ENCODE measurements at regions of chr10 and their contacts with region 1.

Region 1: DNA sequence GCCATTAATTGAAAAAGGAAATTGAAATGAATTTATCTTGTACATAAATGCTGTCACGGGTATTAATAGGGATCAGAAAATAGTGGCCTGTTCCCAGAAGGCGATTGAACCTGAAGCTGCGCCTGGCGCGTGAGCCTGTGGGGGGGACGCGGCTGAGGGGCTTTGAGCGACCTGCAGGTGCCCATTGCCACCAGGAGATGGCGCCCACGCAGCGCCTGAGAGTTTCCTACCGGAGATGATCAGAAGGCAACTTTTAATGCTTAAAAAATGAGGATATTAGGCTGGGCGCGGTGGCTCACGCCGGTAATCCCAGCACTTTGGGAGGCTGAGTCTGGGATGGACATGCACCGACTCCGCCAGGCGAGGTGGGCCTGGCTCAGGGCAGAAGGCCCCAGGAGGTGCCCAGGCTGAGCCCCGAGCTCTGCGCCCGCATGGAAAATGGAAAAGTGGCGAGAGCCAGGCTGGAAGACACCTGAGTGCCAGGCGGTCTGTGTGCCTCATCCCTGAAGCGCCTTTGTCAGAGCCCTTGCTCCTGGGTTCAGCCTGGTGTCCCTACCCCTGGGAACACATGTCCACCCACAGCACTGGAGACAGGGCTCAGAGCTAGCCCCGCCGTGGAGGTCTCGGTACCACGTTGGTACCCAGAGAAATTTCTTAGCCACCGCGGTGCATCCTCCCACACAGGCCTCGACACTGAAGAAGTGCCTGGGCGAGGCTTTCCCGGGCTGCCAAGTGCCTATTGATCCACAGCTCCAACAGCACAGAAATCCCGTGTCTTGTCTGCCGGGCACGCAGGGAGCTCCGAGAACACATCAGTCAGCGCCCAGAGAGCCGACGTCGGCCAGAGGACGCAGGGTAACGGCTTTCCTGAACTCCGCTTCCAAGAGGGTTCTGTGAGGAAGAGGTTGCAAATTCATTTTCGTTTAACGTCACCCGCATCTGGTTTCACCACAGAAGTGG is 117.4 kb downstream of the INPP5A start:
- DNase-seq: peak in 2 of 5 donors; percentile 45 to 53
- ATAC-seq: no peak
- H3K4me3 ChIP-seq: no peak overlapping the region
- H3K27ac ChIP-seq: no peak overlapping the region
- H3K4me1 ChIP-seq: peaks cover 0 to 9% (median 0%) of the 10 kb centered on the region in 12 donors
- H3K27me3 ChIP-seq: no peaks in the 10 kb centered on the region
- CTCF ChIP-seq: peak; percentile 77 to 93 (median 89)
- POLR2A ChIP-seq: no peak

Region 2: DNA sequence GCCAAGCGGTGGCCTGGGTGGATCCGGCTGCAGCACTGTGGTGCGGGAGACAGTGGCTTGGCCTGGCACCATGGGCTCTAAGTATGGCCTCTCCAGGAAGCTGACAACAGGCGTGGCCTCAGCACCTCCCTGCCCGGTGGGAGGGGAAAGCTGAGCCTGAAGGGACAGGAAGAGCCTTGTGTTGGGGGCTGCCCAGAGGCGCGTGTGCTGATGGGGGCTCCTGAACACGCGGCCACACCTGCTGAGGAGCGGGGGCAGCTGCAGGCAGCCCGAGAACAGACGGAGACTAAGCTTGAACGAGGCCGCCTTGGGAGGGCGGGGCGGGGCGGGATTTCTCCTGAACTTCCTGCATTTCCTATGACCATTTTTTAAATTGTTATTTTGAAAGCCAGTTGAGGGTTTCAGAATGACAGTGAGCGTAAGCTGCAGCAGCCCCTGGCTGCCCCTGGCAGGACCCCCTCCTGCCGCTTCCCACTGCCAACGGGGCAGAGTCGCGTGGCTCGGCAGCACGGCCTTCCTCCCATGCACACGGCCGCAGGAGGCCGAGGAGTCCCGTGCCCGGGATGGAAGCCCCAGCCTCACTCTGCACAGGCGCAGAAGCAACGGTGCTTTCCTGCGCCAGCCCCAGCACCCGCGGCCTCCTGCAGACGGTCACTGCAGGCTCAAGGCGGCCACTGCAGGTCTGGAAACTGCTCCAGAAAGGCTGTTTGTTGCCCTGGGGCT is 425.0 kb before region 1 on chr10:
- intact Hi-C with region 1: loop called in 1 of 10 experiments (anchors 5 kb)
- DNase-seq: peak in 3 of 5 donors; percentile 45 to 79 (median 49)
- ATAC-seq: peak; percentile 45 to 55 (median 48)
- H3K4me3 ChIP-seq: peak overlapping the region in 9 of 12 donors; percentile 28 to 54 (median 40)
- H3K27ac ChIP-seq: peak overlapping the region in 9 of 12 donors; percentile 5 to 87 (median 39)
- H3K4me1 ChIP-seq: peaks cover 0 to 58% (median 0%) of the 10 kb centered on the region in 12 donors
- H3K27me3 ChIP-seq: no peaks in the 10 kb centered on the region
- CTCF ChIP-seq: no peak
- POLR2A ChIP-seq: no peak

Region 3: GRCh38 chr10:132434405-132435005 is 220.5 kb before region 1 on chr10:
- intact Hi-C with region 1: no loop called
- DNase-seq: peak in 4 of 5 donors; percentile 59 to 85 (median 70)
- ATAC-seq: peak in 2 of 4 donors; percentile 37 to 50
- H3K4me3 ChIP-seq: peak overlapping the region in 1 of 12 donors; percentile 26
- H3K27ac ChIP-seq: no peak overlapping the region
- H3K4me1 ChIP-seq: peaks cover 0 to 17% (median 0%) of the 10 kb centered on the region in 12 donors
- H3K27me3 ChIP-seq: no peaks in the 10 kb centered on the region
- CTCF ChIP-seq: no peak
- POLR2A ChIP-seq: no peak

Region 4: DNA sequence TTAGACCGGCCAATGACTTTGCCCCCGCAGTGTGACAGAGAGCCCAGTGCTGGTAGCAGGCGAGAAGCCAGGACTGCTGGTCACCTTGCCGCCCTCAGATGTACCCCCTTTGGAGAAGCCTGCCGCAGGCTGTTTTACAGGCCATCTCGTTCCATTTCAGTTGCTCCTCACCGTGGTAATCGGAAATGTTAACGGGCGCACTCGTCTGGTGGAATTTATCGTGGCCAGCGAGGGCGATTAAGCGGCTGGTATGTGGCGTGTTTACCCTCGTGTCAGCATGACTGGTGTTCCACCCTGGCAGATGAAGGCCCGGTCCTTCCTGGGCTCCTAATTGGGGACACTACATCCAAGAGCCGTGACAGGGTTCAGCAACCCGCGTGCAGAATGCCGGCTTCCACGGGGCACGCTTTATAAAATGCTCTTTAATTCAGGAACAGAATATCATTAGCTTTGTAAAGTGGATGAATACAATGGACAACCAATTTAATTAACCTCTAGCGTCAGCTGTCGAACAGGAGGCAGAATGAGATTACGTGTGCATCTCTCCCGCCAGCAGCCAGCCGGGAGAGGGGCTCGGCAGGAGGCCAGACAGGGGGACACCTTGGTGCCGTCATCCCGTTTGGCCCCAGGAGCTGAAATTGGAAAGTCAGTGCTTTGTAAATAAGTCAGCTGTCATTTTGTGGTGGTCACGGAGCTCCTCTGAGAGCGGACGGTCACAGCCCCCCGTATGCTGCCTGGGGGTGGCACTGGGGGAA is 22.7 kb after region 1 on chr10:
- intact Hi-C with region 1: no loop called
- DNase-seq: peak in 1 of 5 donors; percentile 9
- ATAC-seq: peak in 1 of 4 donors; percentile 19
- H3K4me3 ChIP-seq: no peak overlapping the region
- H3K27ac ChIP-seq: no peak overlapping the region
- H3K4me1 ChIP-seq: no peaks in the 10 kb centered on the region
- H3K27me3 ChIP-seq: no peaks in the 10 kb centered on the region
- CTCF ChIP-seq: no peak
- POLR2A ChIP-seq: no peak

Region 5: DNA sequence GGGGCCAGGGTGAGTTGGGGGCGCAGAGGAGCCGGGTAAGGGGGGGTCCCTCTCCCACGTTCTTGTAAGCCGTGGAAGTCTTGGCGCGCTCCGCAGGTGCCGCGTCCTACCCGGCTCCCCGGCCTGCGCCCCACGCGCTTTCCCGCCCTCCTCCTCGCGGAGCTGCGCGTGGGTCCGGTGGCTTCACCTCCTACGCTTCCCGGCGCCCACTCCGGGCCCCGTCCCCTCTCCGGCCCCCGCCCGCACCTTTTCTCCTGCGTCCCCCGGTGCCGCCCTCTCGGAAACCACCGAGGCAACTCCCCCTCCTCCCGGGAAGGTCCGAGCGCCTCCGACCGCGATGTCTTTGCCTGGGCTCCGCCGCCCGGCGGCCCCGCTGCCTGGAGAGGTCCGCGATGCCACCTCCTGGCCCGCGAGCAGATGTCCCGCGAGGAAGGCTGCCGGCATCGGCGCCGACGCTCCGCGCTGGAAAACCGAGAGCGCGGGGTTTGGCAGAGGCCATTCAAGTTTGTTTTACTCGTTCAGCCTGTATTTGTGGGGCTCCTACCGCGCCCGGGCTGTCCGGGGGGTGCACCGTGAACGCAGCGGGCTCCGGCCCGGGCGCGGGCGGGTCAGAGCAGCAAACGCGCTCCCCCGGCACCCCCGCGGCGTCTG is 133.3 kb after region 1 on chr10:
- intact Hi-C with region 1: loop called in 3 of 10 experiments (anchors 5 kb)
- DNase-seq: no peak
- ATAC-seq: peak in 2 of 4 donors; percentile 27 to 49
- H3K4me3 ChIP-seq: no peak overlapping the region
- H3K27ac ChIP-seq: no peak overlapping the region
- H3K4me1 ChIP-seq: peaks cover 0 to 47% (median 14%) of the 10 kb centered on the region in 12 donors
- H3K27me3 ChIP-seq: peaks cover 47 to 80% (median 67%) of the 10 kb centered on the region in 9 donors
- CTCF ChIP-seq: peak in 3 of 12 donors; percentile 5 to 17 (median 12)
- POLR2A ChIP-seq: no peak

Region 6: DNA sequence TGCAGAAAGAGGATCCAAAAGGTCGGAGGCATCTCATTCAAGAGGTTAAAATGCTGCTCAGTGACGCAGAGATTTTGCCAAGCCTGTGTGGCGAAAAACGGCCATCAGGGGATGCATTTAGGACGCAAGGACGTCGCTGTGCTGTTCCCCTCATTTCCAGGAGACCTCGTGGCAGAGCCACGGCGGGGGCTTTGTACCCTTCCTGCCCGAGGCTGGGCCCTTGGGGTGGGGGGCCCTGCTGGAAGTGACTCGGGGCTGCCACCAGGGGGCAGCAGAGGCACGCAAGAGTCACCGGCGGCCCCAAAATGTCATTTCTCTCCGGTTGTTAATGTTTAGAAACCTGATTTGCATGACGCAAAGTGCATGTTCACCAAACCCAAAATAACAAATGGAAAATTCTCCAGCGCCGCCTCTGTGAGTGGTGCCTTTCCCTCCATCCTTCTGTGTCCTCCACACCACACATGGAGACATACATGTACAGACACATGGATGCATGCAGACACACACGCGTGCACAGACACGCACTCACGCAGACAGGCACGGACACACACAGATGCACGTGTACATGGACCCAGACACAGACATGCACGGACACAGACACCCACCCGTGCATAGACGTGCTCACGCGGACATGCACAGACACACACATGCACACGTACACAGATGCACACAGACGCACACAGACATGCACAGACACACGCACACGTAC is 182.0 kb after region 1 on chr10:
- intact Hi-C with region 1: loop called in 3 of 10 experiments (anchors 5 to 10 kb)
- DNase-seq: peak in 1 of 5 donors; percentile 14
- ATAC-seq: peak in 3 of 4 donors; percentile 40 to 64 (median 59)
- H3K4me3 ChIP-seq: peak overlapping the region in 1 of 12 donors; percentile 3
- H3K27ac ChIP-seq: no peak overlapping the region
- H3K4me1 ChIP-seq: peaks cover 0 to 6% (median 0%) of the 10 kb centered on the region in 12 donors
- H3K27me3 ChIP-seq: peaks cover 10 to 55% (median 22%) of the 10 kb centered on the region in 9 donors
- CTCF ChIP-seq: peak; percentile 89 to 99 (median 96)
- POLR2A ChIP-seq: no peak

Region 7: DNA sequence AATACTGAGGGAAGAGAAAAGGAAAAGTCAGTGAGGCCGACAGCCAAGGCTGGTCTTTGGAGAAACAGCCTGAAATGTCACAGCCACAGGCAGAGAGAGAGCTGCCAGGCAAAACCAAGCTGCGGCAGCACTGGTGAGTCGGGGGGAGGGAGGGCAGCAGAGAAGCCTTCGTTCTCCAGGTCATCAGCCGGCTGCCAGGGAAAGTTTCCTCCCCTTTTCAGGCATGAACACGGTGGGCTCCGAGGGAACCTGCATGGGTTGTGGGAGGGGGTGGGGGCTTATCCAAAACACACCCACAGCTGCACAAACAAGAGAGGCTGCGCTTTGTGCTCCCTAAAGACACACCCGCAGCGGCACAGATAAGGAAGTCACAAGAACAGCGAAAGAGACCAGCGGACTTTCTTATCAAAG is 193.3 kb after region 1 on chr10:
- intact Hi-C with region 1: no loop called
- DNase-seq: peak in 1 of 5 donors; percentile 14
- ATAC-seq: peak in 1 of 4 donors; percentile 36
- H3K4me3 ChIP-seq: peak overlapping the region in 5 of 12 donors; percentile 5 to 33 (median 12)
- H3K27ac ChIP-seq: no peak overlapping the region
- H3K4me1 ChIP-seq: peaks cover 0 to 11% (median 0%) of the 10 kb centered on the region in 12 donors
- H3K27me3 ChIP-seq: peaks cover 0 to 17% (median 5%) of the 10 kb centered on the region in 9 donors
- CTCF ChIP-seq: no peak
- POLR2A ChIP-seq: no peak

Region 8: GRCh38 chr10:132961787-132962622 is 307.0 kb after region 1 on chr10:
- intact Hi-C with region 1: no loop called
- DNase-seq: peak; percentile 49 to 79 (median 71)
- ATAC-seq: peak; percentile 44 to 79 (median 66)
- H3K4me3 ChIP-seq: peak overlapping the region; percentile 12 to 77 (median 62)
- H3K27ac ChIP-seq: peak overlapping the region in 5 of 12 donors; percentile 11 to 86 (median 54)
- H3K4me1 ChIP-seq: peaks cover 0 to 47% (median 6%) of the 10 kb centered on the region in 12 donors
- H3K27me3 ChIP-seq: peaks cover 0 to 38% (median 0%) of the 10 kb centered on the region in 9 donors
- CTCF ChIP-seq: peak in 1 of 12 donors; percentile 16
- POLR2A ChIP-seq: no peak